G401 (cell line): ENCODE measurements at regions of chr1 and their contacts with region 1.

Region 1: DNA sequence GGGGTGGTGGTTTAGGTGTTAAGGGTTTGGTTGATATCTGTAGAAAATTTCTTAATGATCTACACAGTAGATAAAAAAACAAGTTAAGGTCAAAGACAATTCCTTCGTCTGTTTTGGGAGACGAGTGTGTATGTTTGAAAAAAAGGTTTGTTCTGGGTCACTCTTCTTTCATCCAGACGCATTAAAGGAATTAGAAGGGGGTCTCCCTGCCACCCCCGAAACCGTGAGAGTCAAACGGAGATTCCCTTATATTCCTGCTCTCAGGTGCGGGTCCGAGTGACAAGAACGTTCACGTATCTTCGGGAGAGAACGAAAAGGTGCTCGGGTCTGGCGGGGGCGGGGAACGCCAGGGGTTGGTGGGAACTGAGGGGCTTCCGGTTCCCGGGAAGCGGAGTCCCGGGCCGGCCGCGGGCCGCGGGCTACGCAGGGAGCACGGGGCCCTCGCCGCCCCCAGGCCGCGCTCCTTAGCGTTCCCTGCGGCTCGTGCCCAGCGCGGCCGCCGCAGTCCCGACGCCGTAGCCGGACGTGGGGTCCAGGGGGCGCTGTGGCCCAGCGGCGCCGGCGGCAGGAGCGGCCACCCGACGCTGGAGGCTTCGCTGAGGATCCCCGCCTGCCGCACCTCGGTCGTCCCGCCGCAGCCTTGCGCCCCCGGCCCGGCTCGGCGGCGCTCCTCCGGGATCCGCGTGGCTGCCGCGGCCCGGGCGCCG is at the start of gene ZFYVE9:
- DNase-seq: peak; percentile 74
- total RNA-seq, gene ZFYVE9: 15.4 and 21.5 TPM in 2 replicates

Region 2: DNA sequence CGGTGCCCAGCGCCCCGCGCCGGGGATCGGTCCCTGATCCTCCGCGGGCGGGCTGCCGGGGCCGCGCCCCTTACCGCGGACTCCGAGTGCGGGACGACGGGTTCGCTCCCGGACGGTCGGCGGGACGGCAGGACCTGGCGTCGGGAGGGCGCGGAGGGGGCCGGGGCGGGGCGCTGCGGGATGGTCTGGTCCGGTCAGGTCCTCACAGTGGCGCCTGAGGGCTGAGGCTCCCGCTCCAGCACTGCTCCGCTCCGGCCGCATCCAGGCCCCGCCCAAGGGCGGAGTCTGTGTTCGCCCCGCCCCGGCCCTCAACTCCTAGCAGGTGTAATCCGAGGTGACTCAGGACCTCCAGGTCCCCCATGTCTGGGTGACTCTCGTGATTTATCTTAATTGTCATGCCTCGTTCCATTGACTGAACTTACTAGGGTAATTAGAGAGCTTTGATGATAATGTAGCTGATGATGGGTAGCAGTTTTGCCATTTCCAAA is 151.1 kb before region 1 on chr1 and contains the start of gene RAB3B:
- in situ Hi-C with region 1: no loop called
- DNase-seq: peak; percentile 10
- total RNA-seq, gene RAB3B: 2.3 and 3.0 TPM in 2 replicates

Region 3: DNA sequence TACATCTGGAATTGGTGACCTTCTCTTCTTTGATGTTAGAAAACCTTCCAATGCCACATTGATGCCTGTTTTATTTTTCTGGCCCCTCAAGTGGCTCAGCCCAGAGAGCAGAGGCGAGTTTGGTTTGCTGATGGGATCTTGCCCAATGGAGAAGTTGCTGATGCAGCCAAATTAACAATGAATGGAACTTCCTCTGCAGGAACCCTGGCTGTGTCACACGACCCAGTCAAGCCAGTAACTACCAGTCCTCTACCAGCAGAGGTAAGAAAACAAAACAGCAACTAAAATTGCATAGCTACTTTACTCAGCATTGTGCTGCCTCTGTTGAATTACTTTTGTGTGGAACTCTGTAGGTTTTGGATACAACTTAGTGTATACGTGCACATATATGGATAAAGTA is 126.7 kb after region 1 on chr1:
- in situ Hi-C with region 1: loop called (anchors 10 kb)
- DNase-seq: peak; percentile 33